Sigmoid colon (tissue), 7 donors: ENCODE measurements at regions of chr16 and their contacts with region 1.

Region 1: GRCh38 chr16:46607529-46607928 is 13.7 kb downstream of the SHCBP1 start:
- DNase-seq: no peak
- H3K4me3 ChIP-seq: no peak overlapping the region
- H3K27ac ChIP-seq: no peak overlapping the region
- H3K4me1 ChIP-seq: no peaks in the 10 kb centered on the region
- H3K27me3 ChIP-seq: no peaks in the 10 kb centered on the region
- CTCF ChIP-seq: peak in 1 of 4 experiments; percentile 24
- EP300 ChIP-seq: no peak
- POLR2A ChIP-seq: no peak

Region 2: GRCh38 chr16:46512960-46513359 is 94.6 kb before region 1 on chr16:
- intact Hi-C with region 1: no loop called
- DNase-seq: no peak
- H3K4me3 ChIP-seq: no peak overlapping the region
- H3K27ac ChIP-seq: no peak overlapping the region
- H3K4me1 ChIP-seq: no peaks in the 10 kb centered on the region
- H3K27me3 ChIP-seq: no peaks in the 10 kb centered on the region
- CTCF ChIP-seq: no peak
- EP300 ChIP-seq: no peak
- POLR2A ChIP-seq: no peak

Region 3: GRCh38 chr16:46555951-46556350 is 51.6 kb before region 1 on chr16:
- intact Hi-C with region 1: loop called (anchors 2 kb)
- DNase-seq: no peak
- H3K4me3 ChIP-seq: no peak overlapping the region
- H3K27ac ChIP-seq: no peak overlapping the region
- H3K4me1 ChIP-seq: peaks cover 0 to 4% (median 0%) of the 10 kb centered on the region in 4 donors
- H3K27me3 ChIP-seq: peaks cover 0 to 6% (median 0%) of the 10 kb centered on the region in 3 donors
- CTCF ChIP-seq: no peak
- EP300 ChIP-seq: no peak
- POLR2A ChIP-seq: no peak

Region 4: GRCh38 chr16:46649928-46650623 is 42.5 kb after region 1 on chr16:
- intact Hi-C with region 1: no loop called
- DNase-seq: peak; percentile 81
- H3K4me3 ChIP-seq: peak overlapping the region in 3 of 4 donors; percentile 14 to 28 (median 21)
- H3K27ac ChIP-seq: peak overlapping the region; percentile 62 to 73 (median 68)
- H3K4me1 ChIP-seq: no peaks in the 10 kb centered on the region
- H3K27me3 ChIP-seq: no peaks in the 10 kb centered on the region
- CTCF ChIP-seq: no peak
- EP300 ChIP-seq: no peak
- POLR2A ChIP-seq: no peak